AG04450 (cell line): ENCODE measurements at regions of chr1 and their contacts with region 1.

Region 1: DNA sequence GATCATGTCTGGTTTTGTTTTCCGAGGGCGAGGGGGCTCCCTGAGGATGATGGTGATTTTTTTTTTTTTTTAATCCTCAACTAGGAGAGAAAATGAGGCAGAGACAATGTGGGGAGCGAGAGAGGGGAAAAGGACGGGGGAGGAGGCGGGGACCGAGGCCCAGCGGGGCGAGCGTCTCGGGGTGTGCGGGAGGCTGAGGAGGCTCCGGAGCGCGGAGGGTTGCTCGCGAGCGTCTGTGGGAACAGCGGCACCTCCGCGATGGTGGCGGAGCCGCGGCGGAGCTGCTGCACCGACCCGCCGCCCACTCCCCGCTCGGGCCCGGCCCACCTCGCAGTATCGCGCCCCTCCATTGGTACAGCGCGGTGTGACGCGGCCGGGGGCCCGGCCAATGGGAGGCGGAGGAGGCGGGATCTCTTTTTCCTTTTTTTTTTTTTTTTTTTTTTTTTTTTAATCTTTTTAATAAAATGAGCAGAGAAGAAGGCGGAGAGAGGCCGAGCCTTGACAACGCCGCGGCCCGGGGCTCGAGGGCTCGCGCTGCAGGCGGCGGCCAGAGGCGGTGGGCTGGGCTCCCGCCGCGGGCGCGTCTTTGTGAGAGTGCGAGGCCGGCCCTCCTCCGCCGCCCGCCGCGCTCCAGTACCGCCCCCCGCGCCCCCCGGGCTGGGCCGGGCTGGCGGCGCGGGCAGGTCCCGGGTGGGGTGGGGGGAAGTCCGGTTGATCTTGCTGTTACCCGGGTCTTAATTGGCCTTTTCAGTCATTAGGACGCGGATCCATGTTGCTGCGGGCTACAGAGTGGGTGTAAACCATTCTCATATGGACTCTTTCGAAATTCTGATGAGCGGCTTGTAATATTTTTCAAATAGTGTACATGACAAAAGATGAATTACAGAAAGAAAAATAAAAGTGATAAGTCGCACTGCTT is at the start of gene RERE:
- DNase-seq: peak; percentile 86
- H3K4me3 ChIP-seq: peak within 1 kb of the TSS; percentile 85
- H3K27ac ChIP-seq: peak within 1 kb of the TSS; percentile 80
- H3K27me3 ChIP-seq: no peaks in the 10 kb centered on the region
- CTCF ChIP-seq: no peak
- polyA plus RNA-seq, gene RERE: 14.3 and 20.6 TPM in 2 replicates

Region 2: GRCh38 chr1:8525558-8526275 is 291.9 kb before region 1 on chr1:
- CTCF ChIA-PET with region 1: interaction called, 8 read pairs
- POLR2A ChIA-PET with region 1: interaction called, 10 read pairs
- DNase-seq: peak; percentile 91
- H3K4me3 ChIP-seq: peak overlapping the region; percentile 64
- H3K27ac ChIP-seq: peak overlapping the region; percentile 71
- H3K27me3 ChIP-seq: no peaks in the 10 kb centered on the region
- CTCF ChIP-seq: no peak

Region 3: DNA sequence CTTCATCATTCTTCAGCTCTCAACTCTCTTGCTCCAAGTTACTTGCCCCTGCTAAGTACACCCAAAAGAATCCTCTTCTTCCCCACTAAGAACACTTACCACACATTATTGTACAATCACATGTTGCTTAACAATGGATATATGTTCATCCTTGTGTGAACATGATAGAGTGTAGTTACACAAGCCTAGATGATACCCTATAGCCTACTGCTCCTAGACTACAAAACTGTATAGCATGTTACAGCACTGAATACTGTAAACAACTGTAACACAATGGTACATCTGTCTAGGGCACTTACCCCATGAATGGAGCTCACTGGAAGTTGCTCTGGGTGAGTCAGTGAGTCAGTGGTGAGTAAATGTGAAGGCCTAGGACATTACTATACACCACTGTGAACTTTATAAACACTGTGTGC is 77.6 kb before region 1 on chr1:
- CTCF ChIA-PET with region 1: no interaction called
- POLR2A ChIA-PET with region 1: interaction called, 25 read pairs
- DNase-seq: peak; percentile 86
- H3K4me3 ChIP-seq: no peak overlapping the region
- H3K27ac ChIP-seq: peak overlapping the region; percentile 68
- H3K27me3 ChIP-seq: no peaks in the 10 kb centered on the region
- CTCF ChIP-seq: no peak

Region 4: GRCh38 chr1:8780405-8780804 is 37.3 kb before region 1 on chr1:
- CTCF ChIA-PET with region 1: no interaction called
- POLR2A ChIA-PET with region 1: no interaction called
- DNase-seq: no peak
- H3K4me3 ChIP-seq: no peak overlapping the region
- H3K27ac ChIP-seq: no peak overlapping the region
- H3K27me3 ChIP-seq: no peaks in the 10 kb centered on the region
- CTCF ChIP-seq: no peak

Region 5: GRCh38 chr1:8790987-8791386 is 26.7 kb before region 1 on chr1:
- CTCF ChIA-PET with region 1: no interaction called
- POLR2A ChIA-PET with region 1: no interaction called
- DNase-seq: no peak
- H3K4me3 ChIP-seq: no peak overlapping the region
- H3K27ac ChIP-seq: no peak overlapping the region
- H3K27me3 ChIP-seq: no peaks in the 10 kb centered on the region
- CTCF ChIP-seq: no peak

Region 6: DNA sequence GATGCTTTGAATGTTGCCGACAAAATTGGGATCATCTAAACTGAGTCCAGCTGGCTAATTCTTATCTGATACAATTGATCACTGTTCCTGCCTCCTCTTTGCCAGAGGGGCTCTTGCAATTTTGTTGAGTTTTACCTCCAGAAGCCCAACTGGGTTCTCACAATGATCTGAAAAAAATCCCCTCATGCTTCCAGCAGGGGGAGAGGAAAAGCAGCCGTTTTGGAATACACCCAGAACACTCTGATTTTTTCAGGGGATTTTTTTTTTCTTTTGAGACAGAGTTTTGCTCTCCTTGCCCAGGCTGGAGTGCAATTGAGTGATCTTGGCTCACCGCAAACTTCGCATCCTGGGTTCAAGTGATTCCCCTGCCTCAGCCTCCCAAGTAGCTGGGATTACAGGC is 13.7 kb after region 1 on chr1:
- CTCF ChIA-PET with region 1: no interaction called
- POLR2A ChIA-PET with region 1: no interaction called
- DNase-seq: no peak
- H3K4me3 ChIP-seq: no peak overlapping the region
- H3K27ac ChIP-seq: no peak overlapping the region
- H3K27me3 ChIP-seq: peaks cover 2% of the 10 kb centered on the region
- CTCF ChIP-seq: peak; percentile 64

Region 7: GRCh38 chr1:8889925-8890785 is 72.5 kb after region 1 on chr1:
- CTCF ChIA-PET with region 1: no interaction called
- POLR2A ChIA-PET with region 1: interaction called, 12 read pairs
- DNase-seq: no peak
- H3K4me3 ChIP-seq: peak overlapping the region; percentile 47
- H3K27ac ChIP-seq: peak overlapping the region; percentile 78
- H3K27me3 ChIP-seq: no peaks in the 10 kb centered on the region
- CTCF ChIP-seq: no peak

Region 8: DNA sequence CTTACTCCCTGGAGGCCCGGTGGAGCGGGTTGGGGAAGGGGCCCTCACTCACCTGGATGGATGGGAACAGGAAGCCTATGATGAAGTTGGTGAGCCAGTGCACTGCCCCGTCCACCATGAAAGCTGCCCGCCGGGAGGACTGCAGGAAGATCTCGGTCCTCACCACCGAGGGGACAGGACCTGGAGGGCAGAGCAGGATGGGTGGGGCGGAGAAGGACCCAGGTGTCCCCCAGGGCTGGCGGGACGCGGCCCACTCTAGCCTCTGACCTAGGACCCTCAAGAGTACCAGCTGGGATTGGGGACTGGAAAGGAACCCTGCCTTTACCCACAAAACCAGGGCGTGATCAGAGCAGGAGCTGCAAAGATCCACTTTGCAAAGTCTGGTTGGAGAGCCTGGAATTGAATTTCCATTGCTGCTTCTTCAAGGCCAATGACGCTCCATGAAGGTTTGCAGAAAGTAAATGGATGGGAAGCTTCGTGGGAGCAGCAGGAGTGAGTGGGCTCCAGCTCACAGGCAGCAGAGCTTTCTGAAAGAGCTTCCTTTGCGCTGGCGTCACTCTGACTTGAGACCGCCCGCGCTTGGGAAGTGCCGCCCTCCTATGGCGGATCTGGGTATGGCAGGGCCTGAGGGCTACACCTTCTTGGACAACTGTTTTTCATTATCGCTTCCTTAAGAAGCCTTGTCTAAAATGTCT is 187.2 kb after region 1 on chr1:
- CTCF ChIA-PET with region 1: no interaction called
- POLR2A ChIA-PET with region 1: no interaction called
- DNase-seq: peak; percentile 76
- H3K4me3 ChIP-seq: no peak overlapping the region
- H3K27ac ChIP-seq: no peak overlapping the region
- H3K27me3 ChIP-seq: peaks cover 2% of the 10 kb centered on the region
- CTCF ChIP-seq: peak; percentile 97